ENCODE measurements at regions of chr1 and their contacts with region 1.

Region 1: DNA sequence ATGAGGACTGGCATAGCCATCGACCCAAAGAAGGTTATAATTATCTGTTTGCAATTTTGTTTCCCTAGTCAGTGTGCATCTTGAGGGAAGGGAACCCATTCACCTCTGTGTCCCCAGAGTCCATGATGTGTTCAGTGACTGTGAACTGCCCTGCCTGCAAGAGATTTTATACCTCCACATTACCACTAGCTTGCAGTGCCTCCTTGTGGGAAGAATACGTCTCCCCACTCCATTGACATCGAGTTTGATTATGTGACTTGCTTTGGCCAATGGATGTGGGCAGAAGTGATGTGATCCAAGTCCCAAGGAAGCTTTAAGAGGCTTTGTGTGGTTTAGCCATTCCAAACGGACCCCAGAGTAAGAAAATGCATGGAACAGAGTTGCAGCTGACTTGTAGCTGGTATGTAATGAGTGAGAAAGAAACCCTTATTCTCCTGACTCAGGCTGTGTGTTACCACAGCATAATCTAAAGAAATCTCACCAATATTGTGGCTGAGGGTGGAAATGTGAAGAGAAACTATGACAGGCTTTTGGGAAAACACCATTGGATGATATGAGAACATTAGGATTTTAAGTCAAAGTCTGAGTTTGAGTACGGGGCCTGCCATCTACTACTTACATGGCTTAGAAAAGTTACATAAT is 47.8 kb upstream of the NRDC start:
- DNase-seq: no peak
- ATAC-seq: peak; percentile 72
- H3K4me3 ChIP-seq: no peak overlapping the region
- H3K27ac ChIP-seq: no peak overlapping the region
- H3K4me1 ChIP-seq: no peaks in the 10 kb centered on the region
- H3K27me3 ChIP-seq: no peaks in the 10 kb centered on the region
- CTCF ChIP-seq: peak in 2 of 3 experiments; percentile 24 to 45; a peak in 3 of 6 replicates
- EP300 ChIP-seq: no peak
- POLR2A ChIP-seq: no peak
- RAD21 ChIP-seq: peak; percentile 50

Region 2: DNA sequence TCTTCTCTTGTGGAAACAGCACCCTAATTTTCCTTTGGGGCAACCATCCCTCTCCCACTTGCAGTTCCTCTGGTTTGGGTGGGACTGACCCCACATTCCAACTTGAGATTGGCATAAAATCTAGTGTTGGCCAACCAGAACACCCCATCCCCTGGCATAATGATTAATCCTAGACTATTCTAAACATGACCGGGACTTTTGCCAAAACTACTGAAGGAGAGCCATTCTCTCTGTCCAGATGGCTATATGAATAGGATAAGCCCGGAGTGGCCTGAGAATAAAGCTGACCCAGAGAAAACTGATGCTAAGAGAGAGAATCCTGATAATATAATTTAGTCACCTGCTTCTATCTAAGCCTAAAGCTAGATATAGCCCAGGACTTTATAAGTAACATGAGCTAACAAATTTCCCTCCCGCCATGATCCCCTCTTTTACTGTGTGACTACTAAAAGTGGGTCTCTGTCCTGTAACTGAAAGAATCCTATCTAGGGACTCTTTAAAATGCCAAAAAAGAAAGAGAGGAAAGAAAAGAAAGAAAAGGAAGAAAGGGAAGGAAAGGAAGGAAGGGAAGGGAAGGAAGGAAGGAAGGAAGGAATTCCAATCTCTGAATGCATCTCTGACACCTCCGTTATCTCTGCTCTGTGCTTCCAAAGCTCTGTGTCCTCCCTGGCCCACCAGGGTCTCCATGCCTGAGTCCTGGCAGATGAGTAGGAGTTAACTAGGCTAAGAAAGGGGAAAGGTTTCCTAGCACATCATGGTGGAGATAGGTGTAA is 19.8 kb before region 1 on chr1:
- CTCF ChIA-PET with region 1: interaction called, 6 read pairs
- POLR2A ChIA-PET with region 1: no interaction called
- RAD21 ChIA-PET with region 1: no interaction called
- SMC1A ChIA-PET with region 1: interaction called, 10 read pairs
- in situ Hi-C with region 1: no loop called
- intact Hi-C with region 1: no loop called
- DNase-seq: no peak
- ATAC-seq: no peak
- H3K4me3 ChIP-seq: no peak overlapping the region
- H3K27ac ChIP-seq: no peak overlapping the region
- H3K4me1 ChIP-seq: peaks cover 2% of the 10 kb centered on the region; the same call in 1 of the 2 replicates
- H3K27me3 ChIP-seq: peaks cover 0 to 2% of the 10 kb centered on the region in 2 experiments; a peak in 2 of 4 replicates
- CTCF ChIP-seq: no peak
- EP300 ChIP-seq: no peak
- POLR2A ChIP-seq: no peak
- RAD21 ChIP-seq: no peak

Region 3: DNA sequence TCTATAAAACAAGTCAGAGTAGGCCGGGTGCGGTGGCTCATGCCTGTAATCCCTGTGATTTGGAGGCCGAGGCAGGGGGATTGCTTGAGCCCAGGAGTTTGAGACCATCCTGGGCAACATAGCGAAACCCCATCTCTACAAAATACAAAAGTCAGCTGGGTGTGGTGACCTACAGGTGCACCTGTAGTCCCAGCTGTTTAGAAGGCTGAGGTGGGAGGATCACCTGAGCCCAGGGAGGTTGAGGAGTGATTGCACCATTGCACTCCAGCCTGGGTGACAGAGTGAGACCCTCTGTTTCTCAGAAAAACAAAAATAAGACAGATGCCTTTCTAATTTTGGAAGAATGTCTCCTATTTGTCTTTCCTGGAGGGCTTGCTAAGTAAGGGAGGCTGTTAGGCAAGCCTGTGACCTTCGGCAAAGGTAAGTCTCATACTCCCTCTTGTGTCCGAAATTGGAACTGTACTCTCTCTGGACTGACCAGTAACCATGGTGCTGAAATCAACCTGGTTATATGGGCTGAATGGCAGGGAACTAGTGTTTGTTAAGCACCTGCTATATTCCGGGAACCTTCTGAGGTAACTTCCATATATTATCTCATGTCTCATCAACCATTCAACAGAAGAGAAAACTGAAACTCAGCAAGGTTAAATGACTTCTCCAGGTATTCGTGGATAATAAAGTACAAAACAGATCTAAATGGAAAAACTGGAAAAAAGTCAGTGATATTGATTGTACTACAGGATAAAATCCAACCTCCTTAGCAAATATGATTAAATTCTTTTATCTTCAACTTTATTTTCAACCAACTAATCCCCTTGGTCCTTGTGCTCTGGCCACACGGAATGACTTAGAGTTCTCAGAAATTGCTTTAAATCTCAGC is 76.0 kb after region 1 on chr1:
- CTCF ChIA-PET with region 1: interaction called, 19 read pairs
- POLR2A ChIA-PET with region 1: no interaction called
- RAD21 ChIA-PET with region 1: interaction called, 22 read pairs
- SMC1A ChIA-PET with region 1: interaction called, 17 read pairs
- in situ Hi-C with region 1: no loop called
- intact Hi-C with region 1: loop called (anchors 1 kb)
- DNase-seq: peak; percentile 65
- ATAC-seq: peak; percentile 100
- H3K4me3 ChIP-seq: no peak overlapping the region
- H3K27ac ChIP-seq: no peak overlapping the region
- H3K4me1 ChIP-seq: no peaks in the 10 kb centered on the region
- H3K27me3 ChIP-seq: no peaks in the 10 kb centered on the region
- CTCF ChIP-seq: peak; percentile 85 to 95 (median 92)
- EP300 ChIP-seq: no peak
- POLR2A ChIP-seq: no peak
- RAD21 ChIP-seq: peak; percentile 97

Measured in GM12878 (cell line).